ENCODE measurements at regions of chr6 and their contacts with region 1.

Region 1: GRCh38 chr6:159134701-159135364 is 34.4 kb upstream of the FNDC1 start:
- DNase-seq: peak; percentile 55
- ATAC-seq: peak; percentile 76 to 77

Region 2: GRCh38 chr6:159008656-159009288 is 126.1 kb before region 1 on chr6:
- intact Hi-C with region 1: loop called in 1 of 2 experiments (anchors 2 kb)
- DNase-seq: no peak
- ATAC-seq: peak in 1 of 2 donors; percentile 40

Region 3: DNA sequence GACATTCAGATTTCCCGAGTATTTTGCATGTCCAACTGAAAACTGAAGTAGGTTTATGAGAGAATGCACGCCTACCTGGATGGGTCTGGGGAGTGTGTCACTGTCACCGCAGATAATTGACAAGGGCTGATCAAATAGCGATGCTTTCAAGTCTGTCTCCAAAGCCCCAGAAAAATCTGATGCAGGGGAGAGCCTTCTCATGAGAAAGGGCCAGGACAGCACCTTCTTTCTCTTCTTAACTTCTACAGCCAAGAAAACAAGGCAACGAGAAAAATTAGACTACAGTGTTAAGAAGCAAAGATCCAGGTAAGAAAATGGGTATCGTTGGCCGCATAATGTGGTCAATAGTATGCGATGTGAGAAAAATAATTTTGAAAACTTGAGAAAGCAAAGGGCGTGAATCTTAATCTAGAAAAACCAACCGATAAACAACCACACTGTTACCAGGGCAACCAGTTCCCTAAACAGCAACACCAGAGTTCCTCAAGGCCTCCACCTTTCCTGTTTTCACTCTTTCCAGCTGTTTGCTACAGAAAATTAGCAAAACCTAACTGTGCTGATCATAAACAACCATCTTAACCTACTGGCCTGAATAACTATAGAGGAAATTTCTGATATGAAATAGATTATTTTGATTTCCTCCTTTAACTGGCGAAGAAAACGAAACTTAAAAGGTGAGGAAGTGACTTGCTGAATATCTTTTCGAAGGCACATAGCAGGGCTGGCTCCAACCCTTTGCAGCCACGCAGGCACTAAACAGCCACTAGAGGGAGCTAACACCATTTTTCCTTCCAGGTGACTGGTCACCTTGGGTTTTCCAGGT is 92.6 kb before region 1 on chr6:
- intact Hi-C with region 1: loop called in 1 of 2 experiments (anchors 1 kb)
- DNase-seq: peak; percentile 44
- ATAC-seq: peak; percentile 75 to 76

Region 4: GRCh38 chr6:159311618-159312017 is 176.8 kb after region 1 on chr6:
- intact Hi-C with region 1: no loop called
- DNase-seq: no peak
- ATAC-seq: no peak

Measured in left cardiac atrium (tissue), 4 donors.